Cardiac septum (tissue), 1 donor: ENCODE measurements at regions of chr15 and their contacts with region 1.

Region 1: GRCh38 chr15:32994810-32995424 is 199.6 kb downstream of the FMN1 start:
- DNase-seq: no peak

Region 2: GRCh38 chr15:32659340-32660155 is 335.4 kb before region 1 on chr15:
- intact Hi-C with region 1: loop called (anchors 5 kb)
- DNase-seq: no peak

Region 3: GRCh38 chr15:32855942-32856341 is 139.0 kb before region 1 on chr15:
- intact Hi-C with region 1: loop called (anchors 10 kb)
- DNase-seq: no peak